Endothelial cell of umbilical vein (primary cell): ENCODE measurements at regions of chr2 and their contacts with region 1.

Region 1: DNA sequence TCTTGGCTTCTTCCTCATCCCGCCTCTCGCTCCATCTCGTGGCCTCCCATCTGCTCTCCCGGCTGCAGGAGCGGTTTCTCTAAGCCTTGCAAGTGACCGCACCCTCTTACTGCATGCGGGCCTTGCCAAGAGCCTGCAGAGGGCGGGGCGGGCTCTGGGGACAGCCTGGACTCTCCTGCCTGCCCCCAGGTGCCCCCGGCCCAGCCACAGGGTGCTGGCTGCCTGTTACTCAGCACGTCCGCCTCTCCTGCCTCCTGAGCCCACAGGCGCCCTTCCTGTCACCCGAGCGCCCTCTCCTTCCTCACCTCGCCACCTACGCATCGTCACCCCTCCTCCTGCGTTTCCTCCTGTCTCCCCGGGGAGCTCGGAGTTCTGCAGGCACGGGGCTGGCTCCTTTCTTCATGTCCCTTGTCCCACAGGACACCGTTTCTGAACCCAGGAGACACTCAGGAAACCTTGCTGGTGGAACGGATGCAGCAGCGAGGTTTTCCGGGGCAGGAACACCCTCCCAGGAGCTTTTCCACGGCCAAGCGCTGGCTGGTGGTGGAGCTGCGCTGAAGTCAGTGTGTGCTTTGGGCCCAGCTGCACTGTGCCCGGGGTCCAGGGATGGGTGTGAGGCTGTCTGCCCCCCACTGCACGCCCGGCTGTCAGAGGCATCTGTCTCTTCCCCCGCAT is 28.5 kb downstream of the HPCAL1 start:
- DNase-seq: peak; percentile 49
- H3K4me3 ChIP-seq: peak overlapping the region in 1 of 3 experiments; percentile 20
- H3K27ac ChIP-seq: peak overlapping the region; percentile 88
- H3K4me1 ChIP-seq: peaks cover 51% of the 10 kb centered on the region
- H3K27me3 ChIP-seq: no peaks in the 10 kb centered on the region
- CTCF ChIP-seq: peak in 1 of 2 donors; percentile 9
- POLR2A ChIP-seq: no peak

Region 2: DNA sequence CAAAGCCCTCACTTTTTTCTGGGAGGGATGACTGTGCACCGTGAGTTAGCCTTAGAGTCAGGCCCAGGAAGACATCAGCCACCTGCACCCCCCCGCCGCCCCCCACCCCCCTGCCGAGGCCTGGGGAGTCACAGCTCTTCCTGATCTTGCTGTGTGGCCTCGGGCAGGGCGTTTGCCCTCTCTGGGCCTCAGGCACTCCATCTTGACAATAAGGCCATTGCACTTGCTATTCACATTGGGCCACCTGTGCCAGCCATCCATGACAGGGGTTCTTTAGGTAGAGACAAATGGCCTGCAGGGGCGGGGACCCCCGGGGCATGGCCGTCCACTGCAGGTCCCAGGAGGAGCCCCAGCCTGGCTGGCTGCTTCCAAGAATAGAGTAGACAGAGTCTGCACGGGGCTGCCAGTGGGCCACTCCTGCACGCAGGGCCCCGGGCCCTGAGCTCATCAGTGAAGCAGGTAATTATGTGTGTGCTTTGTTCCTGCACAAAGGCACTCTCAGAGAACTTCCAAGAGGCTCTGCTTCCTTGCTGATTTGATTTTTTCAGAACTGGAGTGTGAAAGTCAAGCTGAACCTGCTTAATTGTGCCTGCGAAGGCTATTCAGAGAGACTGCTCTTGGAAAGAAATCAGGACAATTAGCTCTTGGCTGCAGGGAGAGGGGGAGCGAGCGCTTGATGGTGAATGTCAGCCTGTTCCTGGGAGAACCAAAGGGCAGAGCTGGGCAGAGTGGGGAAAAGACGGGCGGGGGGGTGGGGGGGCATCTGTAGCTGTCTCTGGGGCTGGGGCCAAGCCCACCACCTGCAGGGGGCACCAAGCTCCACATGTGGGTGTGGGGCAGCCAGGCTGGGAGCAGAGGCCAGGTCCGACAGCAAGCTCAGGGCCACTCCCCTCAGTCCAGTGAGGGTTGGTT is 168.3 kb before region 1 on chr2:
- CTCF ChIA-PET with region 1: no interaction called
- POLR2A ChIA-PET with region 1: no interaction called
- dilution Hi-C with region 1: no loop called
- intact Hi-C with region 1: loop called (anchors 5 kb)
- DNase-seq: peak; percentile 26
- H3K4me3 ChIP-seq: no peak overlapping the region
- H3K27ac ChIP-seq: peak overlapping the region; percentile 97
- H3K4me1 ChIP-seq: peaks cover 57% of the 10 kb centered on the region
- H3K27me3 ChIP-seq: no peaks in the 10 kb centered on the region
- CTCF ChIP-seq: peak in 1 of 2 donors; percentile 18
- POLR2A ChIP-seq: no peak